Activated CD4-positive, alpha-beta T cell treated with anti-CD3 and anti-CD28 coated beads for 36 hours (primary cell): ENCODE measurements at regions of chr16 and their contacts with region 1.

Region 1: DNA sequence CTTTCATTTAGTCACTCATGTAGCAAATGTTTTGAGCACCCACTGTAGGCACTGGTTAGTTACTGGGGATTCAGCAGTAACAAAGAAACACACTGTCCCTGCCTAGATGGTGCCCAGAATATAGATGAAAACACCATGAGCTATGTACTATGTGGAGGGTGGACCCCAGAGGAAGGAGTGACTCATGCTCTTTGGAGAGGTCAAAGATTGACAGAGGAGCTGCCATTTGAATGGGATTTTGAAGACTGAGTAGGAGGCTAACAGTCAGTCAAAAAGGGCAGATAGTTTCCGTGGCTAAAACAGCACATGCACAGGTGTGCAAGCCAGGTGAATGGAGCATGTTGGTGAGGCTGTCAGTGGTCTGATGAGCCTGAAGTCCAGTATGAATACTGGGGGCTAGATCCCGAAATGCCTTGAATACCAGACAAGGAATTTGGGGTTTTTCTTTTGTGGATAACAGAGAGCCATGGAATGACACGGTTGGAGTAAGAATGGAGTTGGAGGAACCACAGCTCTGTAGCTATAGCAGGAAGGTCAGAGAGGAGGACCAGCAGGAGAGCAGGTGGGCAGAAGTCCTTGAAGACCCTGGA is 6.1 kb downstream of the IL21R start:
- DNase-seq: peak; percentile 71
- ATAC-seq: peak; percentile 59
- H3K4me3 Mint-ChIP-seq: peak overlapping the region; percentile 99
- H3K27ac Mint-ChIP-seq: peak overlapping the region; percentile 97
- H3K4me1 Mint-ChIP-seq: peaks cover 73% of the 10 kb centered on the region
- H3K27me3 Mint-ChIP-seq: no peaks in the 10 kb centered on the region

Region 2: DNA sequence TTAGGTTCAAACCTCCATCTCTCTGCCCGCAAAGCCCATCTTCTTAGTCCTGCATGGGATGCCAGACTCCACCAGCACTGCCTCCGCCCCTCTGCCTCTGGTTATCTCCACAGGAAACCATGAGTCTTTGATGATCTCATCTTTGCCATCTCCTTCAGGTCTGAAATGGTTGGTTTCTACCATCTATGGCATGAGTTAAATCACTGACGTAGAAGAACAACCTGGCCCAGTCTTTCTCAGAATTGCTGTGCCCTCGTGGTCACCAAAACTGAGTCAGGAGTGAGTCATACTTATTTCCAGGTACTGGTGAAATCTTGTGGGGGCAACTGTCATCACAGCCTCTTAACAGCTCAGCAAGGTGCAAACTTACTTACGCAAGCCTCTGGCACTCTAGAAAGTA is 810.0 kb before region 1 on chr16:
- CTCF ChIA-PET with region 1: no interaction called
- POLR2A ChIA-PET with region 1: no interaction called
- intact Hi-C with region 1: loop called in 1 of 2 experiments (anchors 5 kb)
- DNase-seq: peak; percentile 83
- ATAC-seq: peak; percentile 91
- H3K4me3 Mint-ChIP-seq: peak overlapping the region; percentile 20
- H3K27ac Mint-ChIP-seq: peak overlapping the region; percentile 82
- H3K4me1 Mint-ChIP-seq: peaks cover 54% of the 10 kb centered on the region
- H3K27me3 Mint-ChIP-seq: peaks cover 19% of the 10 kb centered on the region

Region 3: GRCh38 chr16:27273670-27274423 is 134.3 kb before region 1 on chr16:
- CTCF ChIA-PET with region 1: interaction called, 3 read pairs
- POLR2A ChIA-PET with region 1: interaction called, 15 read pairs
- intact Hi-C with region 1: loop called (anchors 5 kb)
- DNase-seq: peak; percentile 69
- ATAC-seq: peak; percentile 89
- H3K4me3 Mint-ChIP-seq: peak overlapping the region; percentile 35
- H3K27ac Mint-ChIP-seq: peak overlapping the region; percentile 87
- H3K4me1 Mint-ChIP-seq: peaks cover 70% of the 10 kb centered on the region
- H3K27me3 Mint-ChIP-seq: no peaks in the 10 kb centered on the region

Region 4: DNA sequence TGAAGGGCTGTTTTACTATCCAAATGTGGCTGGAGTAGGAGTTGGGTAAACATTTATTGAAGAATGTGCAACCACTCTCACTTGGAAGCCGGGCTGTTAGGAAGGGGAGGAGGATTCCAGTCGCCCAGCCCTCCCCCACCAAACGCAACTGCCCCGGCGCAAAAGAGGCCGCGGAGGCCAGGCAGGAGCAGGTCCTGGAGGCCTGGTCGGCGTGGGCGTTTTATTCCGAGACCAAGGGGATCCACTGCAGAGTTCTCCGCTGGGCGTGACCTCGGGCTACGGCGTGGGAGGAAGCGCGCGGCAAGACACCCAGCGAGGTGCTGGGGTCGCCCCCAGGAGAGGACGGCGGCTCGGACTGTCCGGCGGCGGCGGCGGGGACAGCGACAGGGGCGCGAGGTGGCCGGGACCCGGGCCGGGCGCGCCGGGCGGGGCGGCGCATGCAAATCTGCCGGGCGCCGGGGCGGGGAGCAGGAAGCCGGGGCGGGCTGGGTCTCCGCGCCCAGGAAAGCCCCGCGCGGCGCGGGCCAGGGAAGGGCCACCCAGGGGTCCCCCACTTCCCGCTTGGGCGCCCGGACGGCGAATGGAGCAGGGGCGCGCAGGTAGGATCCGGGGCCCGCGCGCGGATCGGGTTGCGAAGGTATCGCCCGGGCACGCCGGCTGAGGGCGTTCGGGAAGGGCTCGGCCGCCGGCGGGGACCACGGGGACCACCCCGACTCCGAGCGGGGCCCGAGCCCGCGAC is 94.5 kb before region 1 on chr16 and contains the start of gene IL4R:
- CTCF ChIA-PET with region 1: interaction called, 4 read pairs
- POLR2A ChIA-PET with region 1: interaction called, 22 read pairs
- intact Hi-C with region 1: loop called (anchors 1 to 2 kb)
- DNase-seq: peak; percentile 87
- ATAC-seq: no peak
- H3K4me3 Mint-ChIP-seq: peak within 1 kb of the TSS; percentile 90
- H3K27ac Mint-ChIP-seq: peak within 1 kb of the TSS; percentile 97
- H3K4me1 Mint-ChIP-seq: peaks cover 44% of the 10 kb centered on the region
- H3K27me3 Mint-ChIP-seq: no peaks in the 10 kb centered on the region
- total RNA-seq, gene IL4R: 185 to 229 TPM

Region 5: GRCh38 chr16:27374804-27375425 is 33.2 kb before region 1 on chr16:
- CTCF ChIA-PET with region 1: interaction called, 51 read pairs
- POLR2A ChIA-PET with region 1: interaction called, 31 read pairs
- intact Hi-C with region 1: loop called (anchors 1 to 2 kb)
- DNase-seq: peak; percentile 81
- ATAC-seq: peak; percentile 48
- H3K4me3 Mint-ChIP-seq: no peak overlapping the region
- H3K27ac Mint-ChIP-seq: no peak overlapping the region
- H3K4me1 Mint-ChIP-seq: peaks cover 50% of the 10 kb centered on the region
- H3K27me3 Mint-ChIP-seq: no peaks in the 10 kb centered on the region

Region 6: GRCh38 chr16:27426423-27427408 is 18.6 kb after region 1 on chr16:
- CTCF ChIA-PET with region 1: interaction called, 11 read pairs
- POLR2A ChIA-PET with region 1: interaction called, 4 read pairs
- intact Hi-C with region 1: loop called (anchors 1 to 2 kb)
- DNase-seq: peak; percentile 90
- ATAC-seq: peak; percentile 94
- H3K4me3 Mint-ChIP-seq: peak overlapping the region; percentile 43
- H3K27ac Mint-ChIP-seq: peak overlapping the region; percentile 92
- H3K4me1 Mint-ChIP-seq: peaks cover 82% of the 10 kb centered on the region
- H3K27me3 Mint-ChIP-seq: no peaks in the 10 kb centered on the region

Region 7: DNA sequence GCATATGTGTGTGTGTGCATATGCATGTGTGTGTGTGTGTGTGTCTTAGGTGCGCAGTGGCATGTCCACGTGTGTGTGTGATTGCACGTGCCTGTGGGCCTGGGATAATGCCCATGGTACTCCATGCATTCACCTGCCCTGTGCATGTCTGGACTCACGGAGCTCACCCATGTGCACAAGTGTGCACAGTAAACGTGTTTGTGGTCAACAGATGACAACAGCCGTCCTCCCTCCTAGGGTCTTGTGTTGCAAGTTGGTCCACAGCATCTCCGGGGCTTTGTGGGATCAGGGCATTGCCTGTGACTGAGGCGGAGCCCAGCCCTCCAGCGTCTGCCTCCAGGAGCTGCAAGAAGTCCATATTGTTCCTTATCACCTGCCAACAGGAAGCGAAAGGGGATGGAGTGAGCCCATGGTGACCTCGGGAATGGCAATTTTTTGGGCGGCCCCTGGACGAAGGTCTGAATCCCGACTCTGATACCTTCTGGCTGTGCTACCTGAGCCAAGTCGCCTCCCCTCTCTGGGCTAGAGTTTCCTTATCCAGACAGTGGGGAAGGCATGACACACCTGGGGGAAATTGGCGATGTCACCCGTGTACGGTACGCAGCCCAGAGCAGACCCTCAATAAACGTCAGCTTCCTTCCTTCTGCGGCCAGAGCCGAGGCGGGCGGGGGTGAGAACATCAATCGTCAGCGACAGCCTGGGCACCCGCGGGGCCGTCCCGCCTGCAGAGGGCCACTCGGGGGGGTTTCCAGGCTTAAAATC is 41.5 kb after region 1 on chr16:
- CTCF ChIA-PET with region 1: interaction called, 3 read pairs
- POLR2A ChIA-PET with region 1: interaction called, 6 read pairs
- intact Hi-C with region 1: loop called in 1 of 2 experiments (anchors 2 kb)
- DNase-seq: peak; percentile 85
- ATAC-seq: peak; percentile 60
- H3K4me3 Mint-ChIP-seq: peak overlapping the region; percentile 26
- H3K27ac Mint-ChIP-seq: peak overlapping the region; percentile 89
- H3K4me1 Mint-ChIP-seq: peaks cover 84% of the 10 kb centered on the region
- H3K27me3 Mint-ChIP-seq: no peaks in the 10 kb centered on the region

Region 8: DNA sequence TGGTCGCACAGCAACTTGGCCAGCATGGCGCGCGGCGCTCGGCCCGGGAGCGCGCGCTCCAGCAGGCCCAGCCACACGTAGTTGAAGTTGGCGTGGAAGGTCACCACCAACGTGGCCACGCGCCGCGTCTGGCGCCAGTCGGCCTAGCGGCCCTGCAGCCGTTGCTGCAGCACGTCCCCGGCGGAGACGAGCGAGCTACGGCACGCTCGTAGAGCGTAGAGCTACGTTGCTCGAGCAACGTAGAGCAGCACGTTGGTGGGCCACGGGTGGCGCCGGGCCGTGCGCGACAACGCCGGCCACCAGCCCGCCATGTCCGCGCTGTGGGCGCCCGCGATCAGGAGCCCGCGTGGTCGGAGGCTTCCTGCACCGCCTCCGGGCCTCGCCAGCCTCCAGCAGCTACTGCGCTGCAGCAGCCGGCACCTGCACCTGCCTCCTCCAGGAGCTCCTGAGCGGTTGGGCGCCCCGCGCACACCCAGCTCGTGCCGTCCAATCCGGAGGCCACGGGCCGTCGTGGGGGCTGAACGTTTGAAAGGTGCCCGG is 1215.1 kb after region 1 on chr16:
- CTCF ChIA-PET with region 1: no interaction called
- POLR2A ChIA-PET with region 1: no interaction called
- intact Hi-C with region 1: no loop called
- DNase-seq: peak; percentile 81
- ATAC-seq: peak; percentile 94
- H3K4me3 Mint-ChIP-seq: peak overlapping the region; percentile 77
- H3K27ac Mint-ChIP-seq: peak overlapping the region; percentile 88
- H3K4me1 Mint-ChIP-seq: peaks cover 16% of the 10 kb centered on the region
- H3K27me3 Mint-ChIP-seq: no peaks in the 10 kb centered on the region